ENCODE measurements at regions of chr11 and their contacts with region 1.

Region 1: DNA sequence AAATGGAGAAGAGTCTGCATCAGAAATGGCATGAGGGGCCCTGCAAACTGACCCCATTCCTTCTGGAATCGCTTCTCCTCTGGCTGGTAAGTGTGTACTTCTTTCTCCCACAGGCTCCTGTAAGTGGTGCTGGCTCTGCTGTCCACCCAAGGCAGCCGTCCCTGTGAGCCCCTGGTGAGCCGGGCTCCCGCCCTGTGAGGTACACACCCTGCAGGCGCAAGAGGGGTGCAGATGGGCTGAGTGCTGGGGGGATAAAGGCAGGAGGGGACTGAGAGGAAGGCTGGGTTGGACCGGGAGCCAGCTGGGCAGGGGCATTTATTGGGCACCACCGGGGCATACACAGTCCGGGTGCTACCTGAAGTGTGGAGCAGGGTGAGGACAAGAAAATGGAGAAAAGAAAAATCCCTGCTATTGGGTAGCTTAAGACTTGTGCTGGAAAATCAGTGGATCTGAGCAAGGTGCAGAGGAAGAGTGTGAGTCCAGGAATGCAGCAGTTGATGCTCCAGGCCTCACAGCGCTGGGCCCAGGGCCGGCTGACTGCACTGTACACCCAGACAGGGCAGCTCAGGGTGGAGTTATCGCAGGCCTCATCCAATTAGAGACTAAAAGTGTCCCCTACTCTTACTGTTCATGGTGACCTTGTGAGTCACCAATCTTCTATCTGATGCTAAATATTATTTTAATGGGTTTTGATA is 455.1 kb upstream of the B3GAT1 start:
- DNase-seq: no peak
- H3K4me3 ChIP-seq: no peak overlapping the region
- H3K27ac ChIP-seq: no peak overlapping the region
- H3K4me1 ChIP-seq: no peaks in the 10 kb centered on the region; a peak in 1 of 7 replicates
- H3K27me3 ChIP-seq: peaks cover 0 to 3% (median 0%) of the 10 kb centered on the region in 4 experiments; a peak in 3 of 7 replicates
- CTCF ChIP-seq: no peak
- EP300 ChIP-seq: no peak
- POLR2A ChIP-seq: no peak
- RAD21 ChIP-seq: no peak

Region 2: DNA sequence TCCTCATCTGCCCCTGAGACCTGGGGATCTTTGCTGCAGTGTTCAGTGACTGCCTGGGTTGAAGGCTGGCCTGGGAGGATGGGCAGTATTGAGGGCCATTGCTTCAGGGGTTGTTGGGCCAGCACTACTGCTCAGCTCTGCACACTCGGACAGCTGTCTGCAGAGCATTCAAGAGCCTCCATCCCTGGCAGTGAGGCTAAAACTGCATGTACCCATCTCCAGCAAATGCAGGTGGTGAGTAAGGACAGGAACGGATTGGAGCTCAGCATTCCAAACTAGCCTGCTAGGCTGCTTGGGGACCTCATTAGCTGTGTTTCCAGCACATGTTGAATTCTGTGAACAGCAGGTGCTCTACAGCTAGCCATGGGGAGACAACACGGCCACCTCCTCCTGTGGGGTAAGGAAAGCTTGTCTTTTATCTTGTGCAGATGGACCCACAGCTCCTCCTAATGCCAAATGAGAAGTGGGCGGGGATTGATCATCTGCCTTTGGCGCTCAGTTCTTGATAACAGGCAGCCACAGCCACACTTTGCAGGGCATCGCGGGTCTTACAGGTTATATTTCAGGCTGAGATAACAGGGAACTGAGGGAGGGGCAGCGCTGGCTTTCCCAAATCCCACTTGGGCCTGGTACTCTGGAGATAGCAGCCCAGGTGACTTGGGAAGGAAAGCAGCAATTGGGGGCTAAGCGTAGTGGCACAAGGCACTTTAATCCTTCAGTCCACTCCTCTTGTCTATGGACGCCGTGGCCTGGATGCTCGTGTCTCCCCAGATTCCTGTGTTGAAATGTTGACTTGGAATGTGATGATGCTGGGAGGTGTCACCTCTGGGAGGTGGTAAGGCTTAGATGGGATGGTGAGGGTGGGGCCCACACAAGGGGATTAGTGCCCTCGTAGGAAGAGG is 200.6 kb before region 1 on chr11:
- CTCF ChIA-PET with region 1: no interaction called
- POLR2A ChIA-PET with region 1: no interaction called
- DNase-seq: no peak
- H3K4me3 ChIP-seq: no peak overlapping the region
- H3K27ac ChIP-seq: no peak overlapping the region
- H3K4me1 ChIP-seq: peaks cover 0 to 3% (median 1%) of the 10 kb centered on the region in 4 experiments; a peak in 3 of 7 replicates
- H3K27me3 ChIP-seq: no peaks in the 10 kb centered on the region; a peak in 3 of 7 replicates
- CTCF ChIP-seq: no peak
- EP300 ChIP-seq: no peak
- POLR2A ChIP-seq: no peak
- RAD21 ChIP-seq: no peak

Region 3: GRCh38 chr11:134819041-134819440 is 48.1 kb before region 1 on chr11:
- CTCF ChIA-PET with region 1: interaction called, 26 read pairs
- POLR2A ChIA-PET with region 1: no interaction called
- DNase-seq: no peak
- H3K4me3 ChIP-seq: no peak overlapping the region
- H3K27ac ChIP-seq: no peak overlapping the region
- H3K4me1 ChIP-seq: peaks cover 0 to 3% (median under 1%) of the 10 kb centered on the region in 4 experiments; a peak in 1 of 7 replicates
- H3K27me3 ChIP-seq: 0 out of 7 replicates have a peak, but pooled peaks cover 0 to 3% (median 0%) of the 10 kb centered on the region in 4 experiments
- CTCF ChIP-seq: peak; percentile 66 to 83 (median 69)
- EP300 ChIP-seq: no peak
- POLR2A ChIP-seq: no peak
- RAD21 ChIP-seq: peak; percentile 60 to 73

Region 4: GRCh38 chr11:134845474-134846327 is 21.4 kb before region 1 on chr11:
- CTCF ChIA-PET with region 1: interaction called, 26 read pairs
- POLR2A ChIA-PET with region 1: no interaction called
- DNase-seq: peak in 1 of 2 experiments; percentile 27
- H3K4me3 ChIP-seq: no peak overlapping the region
- H3K27ac ChIP-seq: no peak overlapping the region
- H3K4me1 ChIP-seq: no peaks in the 10 kb centered on the region
- H3K27me3 ChIP-seq: no peaks in the 10 kb centered on the region
- CTCF ChIP-seq: no peak
- EP300 ChIP-seq: no peak
- POLR2A ChIP-seq: no peak
- RAD21 ChIP-seq: no peak

Region 5: GRCh38 chr11:134882141-134882540 is 15.0 kb after region 1 on chr11:
- CTCF ChIA-PET with region 1: interaction called, 54 read pairs
- POLR2A ChIA-PET with region 1: no interaction called
- DNase-seq: peak in 1 of 2 experiments; percentile 28
- H3K4me3 ChIP-seq: no peak overlapping the region
- H3K27ac ChIP-seq: no peak overlapping the region
- H3K4me1 ChIP-seq: no peaks in the 10 kb centered on the region; a peak in 1 of 7 replicates
- H3K27me3 ChIP-seq: no peaks in the 10 kb centered on the region
- CTCF ChIP-seq: no peak
- EP300 ChIP-seq: no peak
- POLR2A ChIP-seq: no peak
- RAD21 ChIP-seq: no peak

Region 6: DNA sequence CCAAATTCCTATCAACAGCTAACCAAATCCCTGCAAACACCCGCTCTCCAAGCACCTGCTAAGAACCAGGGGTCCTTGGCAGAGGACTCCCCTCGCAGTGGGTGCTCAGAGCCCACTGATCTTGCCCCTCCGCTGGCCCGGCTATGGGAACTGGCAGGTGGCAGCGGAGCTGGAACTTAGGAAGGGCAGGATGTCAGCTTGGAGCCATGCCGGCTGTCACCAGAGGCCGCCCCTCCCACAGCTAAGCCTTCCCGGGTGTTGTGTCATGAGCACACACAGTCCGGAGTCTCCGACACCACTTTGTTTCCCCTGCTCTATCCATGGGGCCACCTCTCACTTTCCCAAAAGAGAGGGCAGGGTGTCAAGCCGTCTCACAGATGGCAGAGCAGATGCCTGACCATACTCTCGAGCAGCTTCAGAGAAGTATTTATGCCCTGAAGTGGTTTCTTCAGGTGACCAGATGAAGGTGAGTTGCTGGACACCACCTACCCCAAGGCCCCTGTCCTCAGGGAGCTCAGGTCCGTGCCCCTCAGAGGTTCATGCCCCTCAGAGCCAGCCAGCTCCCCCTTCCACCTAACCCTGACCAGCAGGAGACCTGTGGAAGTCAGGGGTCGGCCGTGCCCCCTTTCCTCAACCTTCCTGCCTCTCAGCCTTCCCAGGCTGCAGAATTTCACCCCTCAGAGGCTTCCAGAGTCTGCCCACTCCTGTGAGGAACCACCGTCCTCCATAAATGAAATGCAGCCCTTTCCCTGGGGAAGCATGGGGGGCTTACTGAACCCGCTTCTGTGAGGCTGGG is 90.6 kb after region 1 on chr11:
- CTCF ChIA-PET with region 1: no interaction called
- POLR2A ChIA-PET with region 1: no interaction called
- DNase-seq: peak in 1 of 2 experiments; percentile 37
- H3K4me3 ChIP-seq: no peak overlapping the region
- H3K27ac ChIP-seq: no peak overlapping the region
- H3K4me1 ChIP-seq: no peaks in the 10 kb centered on the region; a peak in 1 of 7 replicates
- H3K27me3 ChIP-seq: no peaks in the 10 kb centered on the region
- CTCF ChIP-seq: no peak
- EP300 ChIP-seq: no peak
- POLR2A ChIP-seq: no peak
- RAD21 ChIP-seq: no peak

Region 7: DNA sequence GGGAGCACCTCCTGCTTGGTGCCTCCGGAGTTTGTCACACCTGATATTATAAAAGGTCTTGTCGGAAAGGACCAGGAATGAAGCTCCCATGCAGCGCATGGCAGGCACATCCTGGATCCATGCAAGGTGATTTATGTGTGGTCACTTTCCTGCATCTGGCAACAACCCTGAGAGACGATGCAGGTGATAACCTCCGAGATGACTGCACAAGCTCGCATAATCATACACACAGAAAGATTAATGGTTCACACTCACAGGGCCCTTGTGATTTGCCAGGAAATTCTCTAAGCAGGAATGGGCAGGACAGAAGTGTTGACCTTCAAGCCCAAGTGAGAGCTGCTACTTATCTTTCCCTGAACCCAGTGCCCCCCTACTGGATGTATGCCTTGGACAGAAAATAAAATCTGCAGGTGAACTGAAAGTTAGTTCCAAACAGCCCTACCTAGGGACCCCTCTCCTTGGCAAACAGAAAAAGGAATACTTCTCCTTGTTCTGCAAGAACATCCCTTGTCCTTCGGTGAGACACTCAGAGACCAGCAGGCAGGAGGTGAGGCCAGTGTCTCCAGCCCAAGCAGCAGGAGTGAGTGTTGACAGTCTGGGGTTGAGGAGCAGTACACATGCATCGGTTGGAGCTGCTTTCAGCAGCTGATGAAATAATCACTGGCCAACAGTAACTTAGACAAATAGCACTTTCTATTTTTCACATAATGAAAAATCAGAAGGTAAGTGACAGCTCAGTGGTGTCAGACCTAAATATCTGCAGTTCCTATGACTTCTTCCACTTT is 164.3 kb after region 1 on chr11:
- CTCF ChIA-PET with region 1: interaction called, 29 read pairs
- POLR2A ChIA-PET with region 1: no interaction called
- DNase-seq: peak in 1 of 2 experiments; percentile 34
- H3K4me3 ChIP-seq: no peak overlapping the region
- H3K27ac ChIP-seq: no peak overlapping the region
- H3K4me1 ChIP-seq: peaks cover 0 to 11% (median 10%) of the 10 kb centered on the region in 4 experiments; a peak in 6 of 7 replicates
- H3K27me3 ChIP-seq: peaks cover 0 to 5% (median 0%) of the 10 kb centered on the region in 4 experiments; a peak in 4 of 7 replicates
- CTCF ChIP-seq: no peak
- EP300 ChIP-seq: no peak
- POLR2A ChIP-seq: no peak
- RAD21 ChIP-seq: no peak

Region 8: GRCh38 chr11:135069890-135070289 is 202.8 kb after region 1 on chr11:
- CTCF ChIA-PET with region 1: interaction called, 27 read pairs
- POLR2A ChIA-PET with region 1: no interaction called
- DNase-seq: no peak
- H3K4me3 ChIP-seq: no peak overlapping the region
- H3K27ac ChIP-seq: no peak overlapping the region
- H3K4me1 ChIP-seq: no peaks in the 10 kb centered on the region; a peak in 1 of 7 replicates
- H3K27me3 ChIP-seq: no peaks in the 10 kb centered on the region
- CTCF ChIP-seq: no peak
- EP300 ChIP-seq: no peak
- POLR2A ChIP-seq: no peak
- RAD21 ChIP-seq: no peak

Region 9: GRCh38 chr11:135075740-135076139 is 208.6 kb after region 1 on chr11:
- CTCF ChIA-PET with region 1: interaction called, 27 read pairs
- POLR2A ChIA-PET with region 1: no interaction called
- DNase-seq: peak; percentile 81 to 98
- H3K4me3 ChIP-seq: no peak overlapping the region
- H3K27ac ChIP-seq: no peak overlapping the region
- H3K4me1 ChIP-seq: no peaks in the 10 kb centered on the region; a peak in 1 of 7 replicates
- H3K27me3 ChIP-seq: no peaks in the 10 kb centered on the region
- CTCF ChIP-seq: peak; percentile 93 to 99 (median 99)
- EP300 ChIP-seq: no peak
- POLR2A ChIP-seq: no peak
- RAD21 ChIP-seq: peak; percentile 76 to 77